ENCODE measurements at regions of chr19 and their contacts with region 1.

Region 1: GRCh38 chr19:38224014-38224862 is at the start of gene DPF1:
- DNase-seq: peak; percentile 86
- ATAC-seq: peak; percentile 93
- H3K4me3 ChIP-seq: peak within 1 kb of the TSS; percentile 79
- H3K27ac ChIP-seq: peak within 1 kb of the TSS; percentile 16; the same call in 1 of the 2 replicates
- H3K4me1 ChIP-seq: no peaks in the 10 kb centered on the region
- H3K27me3 ChIP-seq: 0 out of 2 replicates have a peak, but pooled peaks cover 2% of the 10 kb centered on the region
- CTCF ChIP-seq: peak; percentile 41; the same call in 1 of the 2 replicates
- total RNA-seq, gene DPF1: 7.7 and 8.1 TPM in 2 replicates

Region 2: DNA sequence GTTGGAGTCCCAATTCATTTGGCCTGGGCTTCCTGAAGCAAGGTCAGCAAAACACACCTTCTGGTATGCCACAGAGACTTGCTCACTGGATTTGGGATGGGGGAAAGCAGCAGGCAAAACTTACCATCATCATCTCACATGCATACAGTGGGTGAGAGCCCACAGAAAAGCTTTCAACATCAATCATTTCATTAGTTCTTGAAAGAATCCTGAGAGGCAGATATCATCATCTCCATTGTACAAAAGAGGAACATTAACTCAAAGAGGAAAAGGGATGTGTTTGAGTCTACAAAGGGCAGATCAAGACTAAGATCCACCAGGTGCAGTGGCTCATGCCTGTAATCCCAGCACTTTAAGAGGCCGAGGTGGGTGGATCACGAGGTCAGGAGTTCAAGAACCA is 324.3 kb before region 1 on chr19:
- CTCF ChIA-PET with region 1: no interaction called
- POLR2A ChIA-PET with region 1: no interaction called
- intact Hi-C with region 1: loop called (anchors 2 kb)
- DNase-seq: no peak
- ATAC-seq: no peak
- H3K4me3 ChIP-seq: no peak overlapping the region
- H3K27ac ChIP-seq: no peak overlapping the region
- H3K4me1 ChIP-seq: no peaks in the 10 kb centered on the region
- H3K27me3 ChIP-seq: no peaks in the 10 kb centered on the region
- CTCF ChIP-seq: no peak

Measured in PC-3 (cell line).